ENCODE measurements at regions of chr2 and their contacts with region 1.

Region 1: GRCh38 chr2:54497763-54498680 is 41.9 kb downstream of the SPTBN1 start:
- DNase-seq: peak in 3 of 10 donors; percentile 21 to 46 (median 43)
- H3K4me3 ChIP-seq: no peak overlapping the region
- H3K27ac ChIP-seq: peak overlapping the region in 25 of 59 donors; percentile 0 to 66 (median 30)
- H3K27me3 ChIP-seq: no peaks in the 10 kb centered on the region
- CTCF ChIP-seq: peak in 52 of 56 donors; percentile 27 to 65 (median 47)

Region 2: GRCh38 chr2:54471221-54471711 is 26.8 kb before region 1 on chr2:
- intact Hi-C with region 1: no loop called
- DNase-seq: peak in 1 of 10 donors; percentile 68
- H3K4me3 ChIP-seq: no peak overlapping the region
- H3K27ac ChIP-seq: peak overlapping the region in 34 of 59 donors; percentile 2 to 78 (median 38)
- H3K27me3 ChIP-seq: no peaks in the 10 kb centered on the region
- CTCF ChIP-seq: no peak

Region 3: DNA sequence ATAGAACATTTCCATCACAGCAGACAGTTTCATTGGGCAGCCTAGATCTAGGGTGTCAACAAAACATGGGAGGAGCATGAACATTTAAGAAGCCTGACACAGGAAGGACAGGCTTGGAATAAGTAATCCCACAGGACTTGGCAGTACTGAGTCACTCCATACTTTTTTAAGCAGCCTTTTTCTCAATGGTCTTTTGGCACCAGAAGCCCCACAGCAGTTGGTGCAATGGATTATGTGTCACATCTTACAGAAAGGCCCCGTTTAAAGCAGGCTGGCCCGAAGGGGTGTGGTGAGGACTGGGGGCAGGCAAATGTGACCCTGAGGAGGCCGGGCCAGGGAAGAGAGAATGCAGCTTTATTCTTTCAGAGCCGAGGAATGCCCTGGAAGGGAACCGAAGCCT is 15.3 kb before region 1 on chr2:
- intact Hi-C with region 1: loop called in 1 of 2 experiments (anchors 2 kb)
- DNase-seq: peak in 1 of 10 donors; percentile 40
- H3K4me3 ChIP-seq: peak overlapping the region in 1 of 59 donors; percentile 12
- H3K27ac ChIP-seq: peak overlapping the region in 45 of 59 donors; percentile 2 to 74 (median 43)
- H3K27me3 ChIP-seq: no peaks in the 10 kb centered on the region
- CTCF ChIP-seq: no peak

Region 4: GRCh38 chr2:54522624-54523281 is 24.7 kb after region 1 on chr2:
- intact Hi-C with region 1: no loop called
- DNase-seq: peak in 1 of 10 donors; percentile 44
- H3K4me3 ChIP-seq: no peak overlapping the region
- H3K27ac ChIP-seq: peak overlapping the region in 15 of 59 donors; percentile 3 to 69 (median 45)
- H3K27me3 ChIP-seq: no peaks in the 10 kb centered on the region
- CTCF ChIP-seq: peak; percentile 38 to 79 (median 66)

Measured in dorsolateral prefrontal cortex (tissue), 120 donors.